Right ventricle myocardium inferior (tissue), 1 donor: ENCODE measurements at regions of chr18 and their contacts with region 1.

Region 1: DNA sequence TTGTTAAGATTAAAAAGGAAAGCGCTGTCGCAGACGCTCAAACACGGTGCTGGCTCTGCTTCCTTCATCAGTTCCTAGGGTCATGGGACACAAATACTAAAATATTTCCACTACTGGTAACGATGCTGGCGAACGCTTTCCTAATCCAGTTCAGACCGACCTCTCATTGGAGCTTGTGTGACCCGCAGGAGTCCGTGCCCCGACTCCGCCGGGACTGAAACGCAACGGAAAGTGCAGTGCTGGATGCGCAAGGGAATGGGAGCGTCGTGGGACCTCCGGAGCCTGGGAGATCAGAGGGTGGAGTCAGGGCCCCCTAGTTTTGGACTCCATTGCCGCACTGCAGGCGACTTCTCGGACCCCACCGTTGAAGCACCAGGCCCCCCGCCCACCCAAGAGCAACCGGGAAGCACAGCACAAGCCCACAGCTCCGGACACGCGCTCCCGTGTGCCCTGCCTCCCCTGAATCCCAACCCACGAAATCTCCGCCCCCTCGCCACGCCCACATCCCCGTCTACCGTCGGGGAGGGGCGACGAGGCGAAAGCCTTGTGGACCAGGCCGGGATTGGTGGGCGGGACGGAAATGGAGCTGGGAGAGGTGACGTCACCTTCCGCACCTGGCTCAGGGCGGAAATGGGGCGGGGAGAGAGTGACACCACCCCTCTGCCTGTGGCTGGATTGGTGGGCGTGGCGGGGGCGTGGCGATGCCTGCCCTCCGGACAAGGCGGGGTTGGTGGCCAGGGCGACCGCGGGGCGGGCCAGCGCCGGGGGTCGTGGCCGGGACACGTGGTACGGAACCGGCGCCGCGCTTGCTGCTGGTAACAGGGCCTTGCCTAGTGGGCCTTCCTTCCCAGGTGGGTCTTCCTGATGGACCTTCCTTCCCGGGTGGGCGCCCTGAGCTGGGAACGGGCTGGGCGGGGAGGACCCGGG is at the start of gene CNDP2:
- DNase-seq: peak; percentile 100
- ATAC-seq: peak; percentile 98
- total RNA-seq, gene CNDP2: 66.4 TPM

Region 2: DNA sequence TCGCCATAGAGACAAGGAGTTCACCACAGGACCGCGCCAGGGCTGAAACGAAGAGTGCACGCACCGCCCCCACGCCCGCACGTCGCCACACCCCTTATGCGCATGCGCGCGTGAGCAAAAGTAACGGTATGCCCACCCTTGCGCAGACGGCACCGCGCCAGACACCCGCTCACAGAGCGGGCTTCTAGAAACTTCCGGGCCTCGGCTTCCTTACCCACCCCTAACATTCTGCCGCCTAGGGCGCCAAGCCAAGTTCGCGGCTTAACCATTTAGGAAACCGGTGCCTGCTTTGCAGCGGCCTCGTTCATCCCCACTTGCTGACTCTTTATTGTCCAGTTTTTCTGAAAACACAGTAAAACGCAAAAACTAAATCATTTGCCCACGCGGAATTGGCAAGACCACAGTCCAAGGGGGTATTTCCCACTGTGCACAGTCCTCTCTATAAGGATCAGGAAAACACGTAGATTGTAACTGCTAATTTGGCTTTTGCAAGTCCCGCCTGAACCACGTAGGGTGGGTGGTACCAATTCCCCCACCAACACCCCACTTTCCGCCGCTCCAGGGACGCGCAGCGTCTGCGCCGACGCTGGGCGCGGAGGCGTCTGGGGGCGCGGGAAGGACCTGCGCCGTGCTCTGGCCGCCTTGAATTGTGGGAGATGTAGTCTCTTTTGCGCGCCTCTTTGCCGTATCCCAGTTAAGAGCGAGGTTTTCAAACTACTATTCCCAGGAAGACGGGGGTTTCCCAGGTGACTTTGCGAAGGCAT is 347.9 kb before region 1 on chr18 and contains the starts of genes FBXO15 and TIMM21:
- intact Hi-C with region 1: loop called (anchors 5 kb)
- DNase-seq: peak; percentile 98
- ATAC-seq: peak; percentile 97
- total RNA-seq, gene FBXO15: not detected
- total RNA-seq, gene TIMM21: 151 TPM

Region 3: GRCh38 chr18:74196220-74197119 is 299.4 kb before region 1 on chr18:
- intact Hi-C with region 1: loop called (anchors 10 kb)
- DNase-seq: no peak
- ATAC-seq: peak; percentile 61

Region 4: DNA sequence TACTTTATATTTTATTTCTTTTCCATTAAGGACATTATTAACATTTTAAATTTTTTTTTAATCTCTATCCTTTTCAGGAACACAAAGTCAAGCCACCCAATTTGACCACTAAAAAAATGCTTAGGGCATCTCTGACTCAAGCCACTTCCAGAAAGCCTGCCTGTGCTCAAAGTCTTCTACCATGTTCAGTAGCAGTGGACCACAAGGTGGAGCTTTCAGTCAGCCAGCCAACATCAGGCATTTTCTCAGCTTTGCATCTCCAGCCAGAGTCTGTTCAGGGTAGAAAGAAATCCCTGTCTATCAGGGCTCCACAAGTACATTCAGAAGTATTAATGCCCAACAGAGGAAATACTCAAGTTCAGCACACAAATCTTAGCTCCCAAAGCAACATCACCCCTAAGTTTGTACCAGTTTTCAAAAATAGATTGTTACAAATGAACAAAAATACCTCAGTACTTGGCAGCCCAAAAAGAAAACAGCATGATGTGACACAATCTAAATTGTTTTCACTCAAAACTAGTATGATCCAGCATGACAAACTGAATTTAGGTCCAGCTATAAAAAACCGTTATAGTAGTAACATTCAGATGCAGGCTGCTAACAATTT is 142.6 kb before region 1 on chr18:
- intact Hi-C with region 1: loop called (anchors 1 kb)
- DNase-seq: no peak
- ATAC-seq: peak; percentile 92

Region 5: GRCh38 chr18:74453016-74453566 is 42.8 kb before region 1 on chr18:
- intact Hi-C with region 1: loop called (anchors 2 kb)
- DNase-seq: no peak
- ATAC-seq: peak; percentile 34

Region 6: DNA sequence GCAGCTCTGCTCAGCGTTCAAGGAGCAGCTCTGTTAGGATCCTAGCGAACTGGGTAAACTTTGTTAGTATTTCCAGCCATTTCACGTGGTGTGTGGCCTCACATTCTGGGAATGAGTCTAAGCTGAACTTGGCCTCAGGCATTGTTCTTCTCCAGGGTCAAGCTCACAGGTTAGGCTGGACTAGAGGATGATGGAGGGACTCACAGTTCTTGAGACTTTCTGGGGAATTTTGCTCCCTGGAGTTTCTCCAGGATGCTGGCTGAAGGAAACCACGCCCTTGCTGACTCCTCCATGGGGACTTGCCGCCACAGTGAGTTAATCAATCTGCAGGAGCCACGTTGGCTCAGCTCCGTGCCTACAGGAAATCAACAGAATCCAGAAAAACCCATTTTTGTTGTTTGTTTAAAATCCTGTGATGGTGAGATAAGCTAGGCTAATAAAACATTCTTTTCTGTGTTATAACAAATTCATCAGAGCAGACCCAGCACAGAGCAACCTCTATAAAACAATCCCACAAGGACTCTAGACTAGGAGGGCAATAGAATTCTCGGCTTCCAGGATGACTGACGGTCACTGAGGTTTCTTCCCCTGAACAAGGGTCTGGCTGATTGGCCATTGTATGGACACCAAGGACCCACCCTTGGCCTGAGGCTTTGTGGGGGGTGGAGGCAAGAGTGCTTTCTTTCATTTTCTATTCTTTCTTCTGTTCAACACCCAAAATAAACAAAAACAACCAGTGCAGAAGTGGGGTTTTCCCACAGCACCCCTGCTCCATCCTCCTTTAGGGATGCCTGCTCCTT is 51.1 kb after region 1 on chr18:
- intact Hi-C with region 1: loop called (anchors 2 kb)
- DNase-seq: no peak
- ATAC-seq: peak; percentile 46

Region 7: GRCh38 chr18:74597662-74598349 is 102.0 kb after region 1 on chr18 and contains the start of gene ZNF407:
- intact Hi-C with region 1: loop called (anchors 1 kb)
- DNase-seq: peak; percentile 92
- ATAC-seq: peak; percentile 94
- total RNA-seq, gene ZNF407: 10.7 TPM

Region 8: DNA sequence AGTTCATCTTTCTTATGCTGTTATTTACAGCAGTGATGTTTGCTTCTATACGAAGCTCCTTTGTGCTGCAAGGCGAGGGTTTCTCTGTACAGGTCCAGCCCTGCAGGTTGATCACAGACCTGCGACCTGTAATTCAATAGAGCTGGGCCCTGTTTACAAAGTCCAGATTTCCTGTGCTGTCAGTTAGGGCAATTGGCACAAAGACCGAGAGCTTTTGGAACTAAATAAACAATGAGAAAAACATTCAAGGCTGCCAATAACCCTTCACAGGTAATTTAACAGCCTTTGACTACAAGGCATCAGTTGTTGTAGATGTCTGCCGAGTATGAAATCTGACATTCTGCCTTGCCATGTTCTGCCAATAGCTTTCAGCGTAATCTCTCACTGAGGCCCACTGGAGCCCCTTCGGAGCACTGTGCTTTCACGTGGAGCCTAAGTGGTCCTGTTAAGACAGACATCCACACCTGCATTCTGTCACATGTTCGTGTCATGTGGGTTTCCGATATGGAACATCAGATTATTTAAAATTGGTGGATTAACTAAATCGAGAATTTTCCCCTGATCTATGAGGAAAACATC is 480.6 kb after region 1 on chr18:
- intact Hi-C with region 1: no loop called
- DNase-seq: no peak
- ATAC-seq: no peak